ENCODE measurements at regions of chr22 and their contacts with region 1.

Region 1: DNA sequence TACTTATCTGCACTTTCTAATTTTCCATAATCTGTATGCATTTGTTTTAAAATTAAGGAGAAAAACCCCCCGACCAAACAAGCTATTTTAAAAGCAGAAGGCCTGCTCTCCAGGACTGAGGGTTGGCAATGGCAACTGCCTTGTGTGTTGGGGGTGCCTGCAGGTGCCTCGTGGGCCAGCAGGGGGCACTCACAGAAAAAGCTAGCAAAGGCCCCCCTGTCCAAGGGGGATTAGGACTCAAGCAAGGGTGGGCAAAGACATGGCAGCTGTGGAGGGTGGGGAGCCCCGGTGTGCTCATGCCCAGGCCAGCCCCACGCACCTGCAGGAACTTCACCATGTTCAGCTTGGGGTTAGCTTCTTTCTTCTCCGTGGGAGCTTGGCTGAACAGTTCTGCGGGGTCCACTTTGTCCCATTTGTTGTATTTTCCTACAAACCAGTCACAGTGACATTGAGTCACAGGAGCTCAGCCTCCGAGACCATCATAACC is 10.3 kb downstream of the TOP3B start:
- DNase-seq: peak; percentile 27
- H3K4me3 Mint-ChIP-seq: no peak overlapping the region
- H3K27ac Mint-ChIP-seq: no peak overlapping the region
- H3K4me1 Mint-ChIP-seq: no peaks in the 10 kb centered on the region
- H3K27me3 Mint-ChIP-seq: no peaks in the 10 kb centered on the region
- CTCF ChIP-seq: peak; percentile 92

Region 2: DNA sequence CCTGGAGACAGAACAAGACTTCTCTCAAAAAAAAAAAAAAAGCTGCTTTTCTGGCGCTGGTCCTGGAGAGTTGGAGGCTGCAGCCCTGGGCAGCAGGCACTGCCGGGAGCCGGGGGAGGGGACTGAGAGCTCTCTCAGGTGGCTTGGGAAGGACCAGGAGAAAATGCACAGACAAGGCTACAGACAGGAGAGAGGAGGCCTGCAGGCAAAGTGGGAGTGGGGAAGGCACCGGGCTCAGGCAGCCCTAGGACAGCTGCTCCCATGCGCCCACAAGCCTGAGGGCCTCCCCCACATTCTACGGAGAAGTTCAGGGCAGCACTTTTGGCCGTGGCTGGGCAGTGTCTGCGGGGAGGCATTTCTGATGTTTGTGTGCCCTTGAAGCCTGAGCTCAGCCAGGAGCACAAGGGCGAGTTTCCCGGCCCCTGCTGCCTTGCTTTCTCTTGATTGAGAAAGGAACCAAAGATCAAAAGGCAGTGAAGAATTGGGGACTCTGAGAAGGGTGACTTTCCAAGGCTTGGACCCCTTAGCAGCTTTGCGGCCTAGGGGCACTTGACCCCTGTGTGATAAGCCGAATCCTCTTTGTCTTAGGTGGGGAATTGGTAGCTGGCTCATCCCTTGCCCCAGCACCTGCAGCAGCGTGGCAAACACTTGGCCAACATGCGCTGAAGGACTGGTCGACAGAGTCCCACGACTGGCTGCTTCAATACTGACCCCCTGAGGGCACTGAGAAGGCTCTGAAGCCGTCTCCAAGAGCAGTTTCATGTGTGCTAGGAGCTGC is 55.0 kb before region 1 on chr22:
- CTCF ChIA-PET with region 1: no interaction called
- POLR2A ChIA-PET with region 1: no interaction called
- intact Hi-C with region 1: no loop called
- DNase-seq: no peak
- H3K4me3 Mint-ChIP-seq: no peak overlapping the region
- H3K27ac Mint-ChIP-seq: no peak overlapping the region
- H3K4me1 Mint-ChIP-seq: no peaks in the 10 kb centered on the region
- H3K27me3 Mint-ChIP-seq: no peaks in the 10 kb centered on the region
- CTCF ChIP-seq: no peak

Region 3: DNA sequence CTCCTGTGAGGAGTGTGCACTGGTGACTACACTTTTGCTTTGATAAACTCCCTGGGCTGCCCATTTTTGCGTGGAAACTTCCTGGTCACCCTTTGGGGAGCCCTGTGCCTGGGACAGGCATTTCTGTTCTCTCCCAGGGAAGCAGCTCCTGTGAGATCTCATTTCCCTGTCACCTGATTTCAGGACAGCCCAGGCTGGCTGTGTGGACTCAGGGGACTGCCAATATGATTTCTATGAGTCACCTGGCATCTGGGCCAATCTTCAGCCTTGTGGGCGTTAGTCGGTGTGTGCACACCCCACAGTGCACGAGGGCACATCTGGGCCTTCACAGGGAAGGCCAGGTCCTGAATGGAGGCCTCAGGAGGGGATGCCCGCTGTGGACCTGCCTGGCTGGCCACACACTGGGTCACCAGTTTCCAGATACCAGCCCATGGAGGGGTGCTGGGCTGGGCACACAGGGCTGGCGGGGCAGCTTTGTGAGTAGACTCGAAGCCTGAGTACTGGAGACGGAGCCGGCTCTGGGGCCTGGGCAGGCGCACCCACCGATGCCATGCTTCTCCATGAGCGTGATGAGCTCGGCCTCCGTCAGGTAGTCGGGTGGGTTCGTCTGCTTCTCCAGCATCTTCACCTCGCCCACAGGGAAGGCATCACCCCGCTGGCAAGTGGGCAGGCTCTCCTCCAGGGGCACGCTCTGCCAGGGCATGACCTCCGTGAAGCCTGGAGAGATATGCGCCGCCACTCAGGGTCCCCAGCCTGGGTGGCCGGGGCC is 10.3 kb before region 1 on chr22:
- CTCF ChIA-PET with region 1: interaction called, 25 read pairs
- POLR2A ChIA-PET with region 1: no interaction called
- intact Hi-C with region 1: no loop called
- DNase-seq: peak; percentile 71
- H3K4me3 Mint-ChIP-seq: no peak overlapping the region
- H3K27ac Mint-ChIP-seq: no peak overlapping the region
- H3K4me1 Mint-ChIP-seq: no peaks in the 10 kb centered on the region
- H3K27me3 Mint-ChIP-seq: no peaks in the 10 kb centered on the region
- CTCF ChIP-seq: no peak

Region 4: DNA sequence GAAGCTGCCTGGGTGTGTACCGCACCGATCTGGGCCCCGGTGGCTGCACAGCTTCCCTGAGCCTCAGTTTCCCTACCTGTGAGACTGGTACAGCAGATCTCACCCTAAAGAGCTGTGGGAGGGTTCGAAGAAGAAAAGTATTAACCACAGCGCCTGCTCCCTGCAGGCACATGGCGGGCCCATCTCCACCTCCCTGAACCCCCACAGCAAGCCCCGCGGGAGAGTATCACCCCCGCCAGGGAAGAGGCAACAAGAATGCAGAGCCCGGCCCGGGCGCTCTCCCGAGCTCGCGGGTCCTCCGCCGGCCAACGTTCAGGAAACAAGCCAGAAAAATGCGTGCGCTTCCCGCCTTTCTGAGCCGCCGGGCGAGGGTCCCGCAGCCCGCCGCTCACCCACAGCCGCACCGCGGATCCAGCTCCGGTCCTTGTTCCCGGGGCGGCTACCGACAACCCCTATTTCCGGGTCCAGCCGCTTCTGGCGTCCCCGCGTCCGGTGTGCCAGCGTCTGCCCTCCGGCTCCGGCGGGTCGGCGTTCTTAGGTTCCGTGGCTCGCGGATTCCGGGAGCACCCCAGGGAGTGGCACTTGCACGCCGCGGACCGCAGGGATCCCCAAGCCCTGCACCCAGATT is 10.1 kb after region 1 on chr22 and contains the start of gene TOP3B:
- CTCF ChIA-PET with region 1: interaction called, 37 read pairs
- POLR2A ChIA-PET with region 1: interaction called, 18 read pairs
- intact Hi-C with region 1: no loop called
- DNase-seq: peak; percentile 78
- H3K4me3 Mint-ChIP-seq: peak within 1 kb of the TSS; percentile 82
- H3K27ac Mint-ChIP-seq: peak within 1 kb of the TSS; percentile 79
- H3K4me1 Mint-ChIP-seq: no peaks in the 10 kb centered on the region
- H3K27me3 Mint-ChIP-seq: no peaks in the 10 kb centered on the region
- CTCF ChIP-seq: no peak
- total RNA-seq, gene TOP3B: 29.3 and 37.0 TPM in 2 replicates